ENCODE measurements at regions of chr14 and their contacts with region 1.

Region 1: DNA sequence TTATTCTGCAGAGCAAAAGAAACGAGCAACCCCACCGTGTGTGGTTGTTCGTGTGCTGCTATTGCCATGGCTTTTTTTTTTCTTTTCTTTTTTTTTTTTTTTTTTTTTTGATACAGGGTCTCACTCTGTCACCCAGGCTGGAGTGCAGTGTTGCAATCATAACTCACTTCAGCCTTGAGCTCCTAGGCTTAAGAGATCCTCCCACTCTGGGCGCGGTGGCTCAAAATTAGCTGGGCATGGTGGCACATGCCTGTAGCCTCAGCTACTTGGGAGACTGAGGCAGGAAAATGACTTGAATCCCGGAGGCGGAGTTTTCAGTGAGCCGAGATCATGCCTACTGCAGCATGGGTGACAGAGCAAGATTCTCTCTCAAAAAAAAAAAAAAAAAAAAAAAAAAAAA is 144.2 kb downstream of the ESR2 start:
- DNase-seq: no peak
- H3K4me3 ChIP-seq: no peak overlapping the region
- H3K27ac ChIP-seq: no peak overlapping the region
- H3K4me1 ChIP-seq: no peaks in the 10 kb centered on the region
- H3K27me3 ChIP-seq: no peaks in the 10 kb centered on the region
- CTCF ChIP-seq: no peak
- POLR2A ChIP-seq: no peak

Region 2: GRCh38 chr14:64040044-64040443 is 109.9 kb before region 1 on chr14:
- CTCF ChIA-PET with region 1: no interaction called
- POLR2A ChIA-PET with region 1: interaction called, 11 read pairs
- dilution Hi-C with region 1: no loop called
- intact Hi-C with region 1: no loop called
- DNase-seq: peak; percentile 28
- H3K4me3 ChIP-seq: no peak overlapping the region
- H3K27ac ChIP-seq: no peak overlapping the region
- H3K4me1 ChIP-seq: no peaks in the 10 kb centered on the region
- H3K27me3 ChIP-seq: no peaks in the 10 kb centered on the region
- CTCF ChIP-seq: peak in 1 of 2 donors; percentile 9
- POLR2A ChIP-seq: no peak